ENCODE measurements at regions of chr18 and their contacts with region 1.

Region 1: GRCh38 chr18:36095936-36096519 is 28.7 kb upstream of the RPRD1A start:
- DNase-seq: peak; percentile 55
- H3K4me3 ChIP-seq: no peak overlapping the region
- H3K27ac ChIP-seq: no peak overlapping the region
- H3K4me1 ChIP-seq: no peaks in the 10 kb centered on the region
- H3K27me3 ChIP-seq: peaks cover 17 to 18% of the 10 kb centered on the region in 2 experiments
- CTCF ChIP-seq: peak; percentile 19 to 29
- POLR2A ChIP-seq: no peak

Region 2: GRCh38 chr18:35470435-35470834 is 625.6 kb before region 1 on chr18:
- CTCF ChIA-PET with region 1: no interaction called
- POLR2A ChIA-PET with region 1: no interaction called
- dilution Hi-C with region 1: no loop called
- intact Hi-C with region 1: no loop called
- DNase-seq: peak; percentile 16
- H3K4me3 ChIP-seq: no peak overlapping the region
- H3K27ac ChIP-seq: peak overlapping the region; percentile 25
- H3K4me1 ChIP-seq: peaks cover 44% of the 10 kb centered on the region
- H3K27me3 ChIP-seq: no peaks in the 10 kb centered on the region
- CTCF ChIP-seq: no peak
- POLR2A ChIP-seq: no peak

Region 3: DNA sequence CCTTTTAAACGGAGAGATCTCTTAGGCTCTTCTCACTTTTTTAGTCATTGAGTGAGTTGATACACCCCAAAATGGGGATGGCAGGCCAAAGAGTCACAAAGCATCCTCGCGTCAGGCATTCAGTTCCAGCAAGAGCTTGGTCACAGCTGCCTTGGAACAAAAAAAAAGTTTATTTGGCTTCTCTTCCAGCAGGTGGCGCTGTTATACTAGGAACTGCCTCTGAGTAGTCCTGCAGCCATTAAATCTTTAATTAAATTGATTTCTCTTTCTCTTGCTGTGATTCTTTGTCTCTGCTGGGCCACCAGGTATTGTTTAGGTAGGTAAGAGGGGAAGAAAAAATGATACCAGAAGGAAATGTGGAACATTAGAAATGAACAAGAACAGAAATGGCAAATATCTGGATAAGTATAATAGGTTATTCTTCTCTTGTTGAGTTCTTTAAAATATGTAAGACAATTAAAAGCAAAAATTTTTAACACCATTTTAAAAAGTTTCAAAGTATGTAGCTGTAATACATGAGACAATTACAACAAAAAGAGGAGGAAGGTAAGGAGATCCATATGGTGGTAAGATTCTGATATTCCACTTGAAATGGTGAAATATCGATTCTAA is 339.4 kb before region 1 on chr18:
- CTCF ChIA-PET with region 1: interaction called, 12 read pairs
- POLR2A ChIA-PET with region 1: no interaction called
- dilution Hi-C with region 1: no loop called
- intact Hi-C with region 1: loop called (anchors 2 kb)
- DNase-seq: peak; percentile 63
- H3K4me3 ChIP-seq: no peak overlapping the region
- H3K27ac ChIP-seq: no peak overlapping the region
- H3K4me1 ChIP-seq: no peaks in the 10 kb centered on the region
- H3K27me3 ChIP-seq: peaks cover 3 to 6% of the 10 kb centered on the region in 2 experiments
- CTCF ChIP-seq: peak; percentile 58 to 75
- POLR2A ChIP-seq: no peak

Region 4: GRCh38 chr18:35953688-35954087 is 142.3 kb before region 1 on chr18:
- CTCF ChIA-PET with region 1: no interaction called
- POLR2A ChIA-PET with region 1: no interaction called
- dilution Hi-C with region 1: no loop called
- intact Hi-C with region 1: no loop called
- DNase-seq: no peak
- H3K4me3 ChIP-seq: no peak overlapping the region
- H3K27ac ChIP-seq: no peak overlapping the region
- H3K4me1 ChIP-seq: peaks cover 3% of the 10 kb centered on the region
- H3K27me3 ChIP-seq: peaks cover 0 to 15% of the 10 kb centered on the region in 2 experiments
- CTCF ChIP-seq: no peak
- POLR2A ChIP-seq: no peak

Region 5: DNA sequence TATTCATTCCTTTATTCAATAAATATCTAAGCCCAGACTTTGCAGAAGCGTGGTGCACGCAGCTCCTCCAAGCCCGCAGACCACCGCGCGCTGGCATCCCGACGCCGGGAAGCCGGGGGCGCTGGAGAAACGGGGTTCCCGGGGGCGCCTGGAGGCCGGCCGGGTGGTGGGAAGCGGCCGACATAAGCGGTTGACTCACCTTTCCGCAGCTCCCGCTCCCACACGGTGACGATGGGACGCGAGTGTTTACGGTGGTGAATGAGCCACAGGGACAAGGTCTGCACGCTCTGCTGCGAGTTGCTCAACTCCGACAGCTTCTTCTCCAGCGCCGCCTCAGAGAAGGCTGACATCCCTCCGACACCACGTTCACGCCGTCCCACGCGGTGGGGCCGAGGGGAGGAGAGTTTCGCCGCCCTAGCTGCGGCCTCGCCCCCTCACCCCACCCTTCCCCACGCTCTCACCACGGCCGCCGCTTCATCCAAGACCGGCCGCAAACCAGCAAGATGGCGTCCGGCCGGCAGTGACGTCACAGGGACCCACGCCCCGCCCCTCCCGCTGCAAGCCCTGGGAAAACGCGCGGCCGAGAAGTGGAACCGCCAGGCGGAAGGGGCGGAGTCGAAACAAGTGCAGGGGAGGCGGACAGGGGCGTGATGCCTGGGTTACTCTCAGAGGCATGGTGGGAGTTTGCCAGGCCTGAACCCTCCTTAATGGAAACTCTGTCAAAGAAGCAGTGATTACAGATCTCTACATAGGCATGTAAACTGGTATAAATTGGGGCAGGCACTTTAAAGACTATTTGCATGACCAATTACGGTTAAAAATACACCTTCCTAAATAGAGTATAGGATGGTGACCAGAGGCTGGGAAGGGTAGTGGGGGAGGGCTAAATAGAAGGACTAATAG is 28.7 kb before region 1 on chr18 and contains the start of gene RPRD1A:
- CTCF ChIA-PET with region 1: interaction called, 10 read pairs
- POLR2A ChIA-PET with region 1: no interaction called
- dilution Hi-C with region 1: no loop called
- intact Hi-C with region 1: no loop called
- DNase-seq: peak; percentile 97
- H3K4me3 ChIP-seq: peak within 1 kb of the TSS; percentile 60 to 92 (median 83)
- H3K27ac ChIP-seq: peak within 1 kb of the TSS; percentile 71
- H3K4me1 ChIP-seq: peaks cover 15% of the 10 kb centered on the region
- H3K27me3 ChIP-seq: no peaks in the 10 kb centered on the region
- CTCF ChIP-seq: no peak
- POLR2A ChIP-seq: peak; percentile 36
- total RNA-seq, gene RPRD1A: 47.4 and 50.7 TPM in 2 replicates

Region 6: GRCh38 chr18:36120300-36120778 is 24.3 kb after region 1 on chr18:
- CTCF ChIA-PET with region 1: interaction called, 14 read pairs
- POLR2A ChIA-PET with region 1: interaction called, 4 read pairs
- dilution Hi-C with region 1: no loop called
- intact Hi-C with region 1: no loop called
- DNase-seq: no peak
- H3K4me3 ChIP-seq: no peak overlapping the region
- H3K27ac ChIP-seq: no peak overlapping the region
- H3K4me1 ChIP-seq: no peaks in the 10 kb centered on the region
- H3K27me3 ChIP-seq: no peaks in the 10 kb centered on the region
- CTCF ChIP-seq: no peak
- POLR2A ChIP-seq: no peak

Region 7: GRCh38 chr18:36284671-36285295 is 188.8 kb after region 1 on chr18:
- CTCF ChIA-PET with region 1: interaction called, 386 read pairs
- POLR2A ChIA-PET with region 1: no interaction called
- dilution Hi-C with region 1: no loop called
- intact Hi-C with region 1: loop called (anchors 1 kb)
- DNase-seq: peak; percentile 71
- H3K4me3 ChIP-seq: no peak overlapping the region
- H3K27ac ChIP-seq: no peak overlapping the region
- H3K4me1 ChIP-seq: no peaks in the 10 kb centered on the region
- H3K27me3 ChIP-seq: peaks cover 6 to 19% of the 10 kb centered on the region in 2 experiments
- CTCF ChIP-seq: peak; percentile 63 to 65
- POLR2A ChIP-seq: no peak

Region 8: DNA sequence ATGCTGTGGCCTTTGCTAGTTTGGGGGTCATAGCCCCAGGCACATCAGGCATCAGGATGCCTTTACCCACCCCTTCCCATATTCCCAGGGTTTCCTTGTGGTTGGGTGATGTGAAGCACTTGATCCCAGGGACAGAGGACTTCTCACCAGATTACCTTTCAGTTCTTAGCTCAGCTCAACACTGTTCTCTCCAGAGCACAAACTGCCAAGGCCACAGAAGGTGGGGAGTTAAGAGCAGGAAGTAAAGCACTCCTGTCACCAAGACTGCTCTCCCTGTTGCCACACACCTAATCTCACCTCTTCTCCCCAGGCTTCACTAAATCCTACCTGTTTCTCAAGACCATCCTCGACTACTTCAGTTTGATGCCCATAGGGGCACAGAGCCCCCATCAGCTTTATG is 227.4 kb after region 1 on chr18:
- CTCF ChIA-PET with region 1: no interaction called
- POLR2A ChIA-PET with region 1: no interaction called
- dilution Hi-C with region 1: no loop called
- intact Hi-C with region 1: no loop called
- DNase-seq: no peak
- H3K4me3 ChIP-seq: no peak overlapping the region
- H3K27ac ChIP-seq: no peak overlapping the region
- H3K4me1 ChIP-seq: no peaks in the 10 kb centered on the region
- H3K27me3 ChIP-seq: peaks cover 0 to 3% of the 10 kb centered on the region in 2 experiments
- CTCF ChIP-seq: no peak
- POLR2A ChIP-seq: no peak

Region 9: DNA sequence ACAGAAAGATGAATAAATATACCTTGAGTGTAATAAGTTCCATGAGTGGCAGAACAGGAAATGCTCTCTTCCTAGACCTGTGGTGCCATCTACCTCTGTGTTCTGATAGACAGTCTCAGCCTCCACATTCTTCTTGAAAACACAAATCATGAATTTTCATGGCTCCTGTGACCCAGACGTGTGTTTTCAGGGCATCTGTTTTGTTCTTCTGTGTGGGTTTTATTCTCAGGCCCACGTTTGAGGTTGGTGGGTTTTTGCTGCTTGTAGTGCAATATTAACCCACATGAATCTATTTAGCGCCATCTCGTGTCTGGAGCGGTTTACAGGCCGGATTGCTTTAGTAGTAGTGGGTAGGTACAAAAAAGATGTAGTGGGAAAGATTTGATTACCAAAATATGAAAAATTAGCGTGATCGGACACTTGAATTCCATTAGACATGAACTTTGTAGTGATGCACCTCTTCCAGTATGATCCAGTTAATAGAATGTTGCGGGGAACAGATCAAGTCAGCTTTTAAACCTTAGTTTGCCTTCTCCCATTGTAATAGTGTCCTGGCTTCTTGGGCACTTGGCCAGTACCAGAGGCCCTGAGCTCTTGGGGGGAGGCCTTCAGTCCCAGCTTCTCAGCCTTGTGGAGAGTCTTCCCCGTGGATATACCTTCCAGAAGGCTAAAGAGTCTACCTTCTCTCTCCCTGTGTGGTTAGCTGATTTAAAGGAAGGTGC is 476.3 kb after region 1 on chr18:
- CTCF ChIA-PET with region 1: interaction called, 41 read pairs
- POLR2A ChIA-PET with region 1: no interaction called
- dilution Hi-C with region 1: no loop called
- intact Hi-C with region 1: loop called (anchors 1 kb)
- DNase-seq: peak; percentile 44
- H3K4me3 ChIP-seq: no peak overlapping the region
- H3K27ac ChIP-seq: no peak overlapping the region
- H3K4me1 ChIP-seq: no peaks in the 10 kb centered on the region
- H3K27me3 ChIP-seq: peaks cover 2 to 4% of the 10 kb centered on the region in 2 experiments
- CTCF ChIP-seq: peak; percentile 39 to 43
- POLR2A ChIP-seq: no peak

Region 10: DNA sequence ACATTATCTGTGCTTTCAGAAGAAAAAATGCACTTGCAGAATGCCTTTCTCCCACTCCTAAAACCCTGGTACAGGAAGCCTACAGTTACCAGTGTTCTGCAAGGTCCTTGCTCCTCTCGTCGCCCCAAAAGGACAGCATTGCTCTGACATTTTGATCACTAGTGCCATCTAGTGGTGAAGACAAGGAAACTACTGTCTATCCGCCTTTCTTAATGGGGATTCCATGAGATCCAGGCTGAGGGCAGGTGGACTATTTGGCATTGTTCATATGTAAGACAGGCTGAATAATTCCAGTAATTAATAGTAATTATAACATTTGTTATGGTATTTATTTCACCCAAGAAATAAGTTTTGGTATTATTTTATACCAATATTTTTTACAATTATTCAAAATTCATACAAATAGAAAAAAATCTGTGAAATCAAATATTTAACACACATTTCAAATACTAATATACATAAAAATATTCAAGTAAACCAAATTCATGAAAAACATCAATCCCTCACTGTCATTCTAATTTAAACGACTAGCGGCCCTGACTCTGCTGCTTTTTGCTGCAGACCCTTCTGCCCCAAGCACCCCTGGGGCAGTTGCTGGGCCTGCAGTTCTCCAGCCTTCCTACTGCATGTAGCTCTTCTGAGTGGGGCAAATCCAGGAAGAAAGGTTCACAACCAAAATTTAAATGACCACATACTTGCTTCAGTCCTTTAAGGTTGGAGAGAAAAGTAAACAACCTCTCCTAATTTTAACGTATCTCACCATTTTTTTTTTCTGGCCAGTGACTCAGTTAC is 713.8 kb after region 1 on chr18:
- CTCF ChIA-PET with region 1: interaction called, 3 read pairs
- POLR2A ChIA-PET with region 1: no interaction called
- dilution Hi-C with region 1: no loop called
- intact Hi-C with region 1: loop called (anchors 5 kb)
- DNase-seq: peak; percentile 66
- H3K4me3 ChIP-seq: no peak overlapping the region
- H3K27ac ChIP-seq: no peak overlapping the region
- H3K4me1 ChIP-seq: no peaks in the 10 kb centered on the region
- H3K27me3 ChIP-seq: no peaks in the 10 kb centered on the region
- CTCF ChIP-seq: peak; percentile 71 to 76
- POLR2A ChIP-seq: no peak

Measured in endothelial cell of umbilical vein (primary cell).